ENCODE measurements at regions of chr21 and their contacts with region 1.

Region 1: GRCh38 chr21:29805105-29805504 is 134.7 kb downstream of the GRIK1 start:
- DNase-seq: no peak
- ATAC-seq: no peak
- H3K4me3 ChIP-seq: no peak overlapping the region
- H3K27ac ChIP-seq: no peak overlapping the region
- H3K4me1 ChIP-seq: no peaks in the 10 kb centered on the region
- H3K27me3 ChIP-seq: no peaks in the 10 kb centered on the region
- CTCF ChIP-seq: no peak
- EP300 ChIP-seq: no peak
- POLR2A ChIP-seq: no peak
- RAD21 ChIP-seq: no peak

Region 2: DNA sequence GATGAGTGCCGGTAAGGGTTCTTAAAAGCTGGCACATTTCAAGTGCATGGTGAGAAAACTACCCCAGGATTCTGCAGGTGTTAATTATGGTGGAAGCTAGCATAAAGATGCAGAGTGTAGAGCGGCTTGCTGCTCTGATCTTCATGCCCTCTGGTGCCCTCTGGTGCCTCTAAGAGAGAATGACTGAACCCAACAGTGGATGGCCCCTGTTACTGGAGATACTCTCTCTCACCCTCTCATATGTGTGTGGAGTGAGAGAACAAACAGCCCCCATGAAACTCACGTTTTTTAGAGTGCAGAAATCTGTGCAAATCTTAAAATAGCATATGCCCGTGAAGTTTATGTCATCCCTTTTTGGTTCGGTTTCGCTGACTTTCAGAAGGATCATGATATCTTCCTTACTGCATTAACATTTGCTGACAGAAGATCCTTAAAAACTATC is 44.7 kb after region 1 on chr21:
- CTCF ChIA-PET with region 1: interaction called, 10 read pairs
- POLR2A ChIA-PET with region 1: no interaction called
- RAD21 ChIA-PET with region 1: no interaction called
- SMC1A ChIA-PET with region 1: no interaction called
- in situ Hi-C with region 1: no loop called
- intact Hi-C with region 1: no loop called
- DNase-seq: peak; percentile 8
- ATAC-seq: peak; percentile 100
- H3K4me3 ChIP-seq: no peak overlapping the region
- H3K27ac ChIP-seq: no peak overlapping the region
- H3K4me1 ChIP-seq: no peaks in the 10 kb centered on the region
- H3K27me3 ChIP-seq: no peaks in the 10 kb centered on the region
- CTCF ChIP-seq: peak; percentile 68 to 83 (median 77); a peak in 5 of 6 replicates
- EP300 ChIP-seq: no peak
- POLR2A ChIP-seq: no peak
- RAD21 ChIP-seq: peak; percentile 90